ENCODE measurements at regions of chr10 and their contacts with region 1.

Region 1: DNA sequence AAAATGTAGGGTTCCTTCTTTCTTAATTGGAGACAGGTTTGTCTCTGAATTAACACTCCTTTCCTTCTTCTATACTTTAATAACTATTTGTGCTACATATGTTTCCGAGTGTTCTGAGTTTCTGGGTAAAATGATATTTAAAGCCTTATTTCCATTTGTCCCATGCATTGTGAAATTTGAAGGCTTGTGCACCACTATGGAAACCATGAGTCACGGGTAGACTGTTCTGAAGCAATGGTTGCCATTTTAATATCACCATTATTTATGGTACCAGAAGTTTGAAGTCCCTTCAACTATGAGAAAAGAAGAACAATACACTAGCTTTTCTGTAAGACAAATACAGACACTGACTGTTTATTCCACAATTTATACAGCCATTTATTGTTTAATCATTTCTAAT is 44.7 kb upstream of the ZEB1 start:
- DNase-seq: no peak
- ATAC-seq: no peak
- H3K4me3 Mint-ChIP-seq: no peak overlapping the region
- H3K27ac Mint-ChIP-seq: no peak overlapping the region
- H3K4me1 Mint-ChIP-seq: no peaks in the 10 kb centered on the region
- H3K27me3 Mint-ChIP-seq: no peaks in the 10 kb centered on the region
- CTCF ChIP-seq: no peak

Region 2: GRCh38 chr10:32163071-32163761 is 888.9 kb after region 1 on chr10:
- CTCF ChIA-PET with region 1: no interaction called
- POLR2A ChIA-PET with region 1: no interaction called
- intact Hi-C with region 1: loop called (anchors 10 kb)
- DNase-seq: no peak
- ATAC-seq: no peak
- H3K4me3 Mint-ChIP-seq: no peak overlapping the region
- H3K27ac Mint-ChIP-seq: no peak overlapping the region
- H3K4me1 Mint-ChIP-seq: no peaks in the 10 kb centered on the region
- H3K27me3 Mint-ChIP-seq: peaks cover 6% of the 10 kb centered on the region
- CTCF ChIP-seq: no peak

Measured in activated B cell treated with CpG ODN at 0.5 μM for 24 hours (primary cell).